Panc1 (cell line): ENCODE measurements at regions of chr19 and their contacts with region 1.

Region 1: GRCh38 chr19:39307046-39307823 is 11.0 kb downstream of the IFNL1 start:
- DNase-seq: no peak
- ATAC-seq: peak; percentile 2; the same call in 1 of the 2 replicates
- H3K4me3 ChIP-seq: no peak overlapping the region
- H3K27ac ChIP-seq: no peak overlapping the region
- H3K4me1 ChIP-seq: peaks cover 9% of the 10 kb centered on the region; the same call in 1 of the 2 replicates
- H3K27me3 ChIP-seq: peaks cover 9% of the 10 kb centered on the region; the same call in 1 of the 2 replicates
- CTCF ChIP-seq: no peak

Region 2: GRCh38 chr19:38989066-38989605 is 318.1 kb before region 1 on chr19:
- CTCF ChIA-PET with region 1: no interaction called
- POLR2A ChIA-PET with region 1: no interaction called
- in situ Hi-C with region 1: no loop called
- intact Hi-C with region 1: no loop called
- DNase-seq: no peak
- ATAC-seq: peak; percentile 80
- H3K4me3 ChIP-seq: no peak overlapping the region
- H3K27ac ChIP-seq: peak overlapping the region; percentile 2
- H3K4me1 ChIP-seq: peaks cover 14% of the 10 kb centered on the region
- H3K27me3 ChIP-seq: no peaks in the 10 kb centered on the region
- CTCF ChIP-seq: no peak

Region 3: DNA sequence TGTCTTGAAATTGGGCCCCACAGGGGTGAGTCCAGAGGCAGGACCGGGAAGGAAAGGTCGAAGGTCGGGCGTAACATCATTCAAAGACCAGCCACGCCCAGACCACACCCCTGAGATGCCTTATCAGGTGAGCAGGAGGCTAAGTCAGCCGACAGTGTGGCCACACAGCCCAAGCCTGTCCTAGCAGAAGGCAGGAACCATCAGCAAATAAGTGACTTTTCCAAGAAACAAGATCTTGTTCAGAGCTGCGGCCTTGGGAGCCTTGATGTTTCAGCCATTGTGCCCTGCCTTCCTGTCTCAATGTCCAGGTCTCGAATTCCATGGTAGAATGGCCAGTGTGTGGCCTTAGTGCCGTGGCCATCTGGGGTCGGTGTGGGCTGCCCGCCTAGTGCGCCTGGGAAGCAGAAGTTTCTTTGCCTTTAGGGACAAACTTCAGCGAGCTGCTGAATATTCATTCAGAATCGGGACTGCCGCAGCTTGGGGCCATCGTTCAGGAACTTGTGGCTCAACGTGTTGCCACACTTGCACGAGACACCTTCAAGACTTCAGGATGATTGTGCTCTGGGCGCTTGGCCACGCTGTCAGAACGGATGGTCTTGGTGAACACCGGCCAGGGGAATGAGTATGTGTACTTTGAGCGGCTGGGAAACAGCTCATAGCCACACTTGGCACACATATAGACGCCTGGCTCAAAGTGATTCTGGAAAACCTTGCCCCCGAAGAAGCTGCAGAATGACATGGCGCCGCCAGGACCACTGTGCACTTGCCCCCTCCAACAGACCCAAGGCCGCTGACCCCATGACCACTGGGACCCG is 52.5 kb before region 1 on chr19:
- CTCF ChIA-PET with region 1: interaction called, 12 read pairs
- POLR2A ChIA-PET with region 1: interaction called, 3 read pairs
- in situ Hi-C with region 1: loop called (anchors 5 kb)
- intact Hi-C with region 1: no loop called
- DNase-seq: no peak
- ATAC-seq: no peak
- H3K4me3 ChIP-seq: no peak overlapping the region
- H3K27ac ChIP-seq: no peak overlapping the region
- H3K4me1 ChIP-seq: no peaks in the 10 kb centered on the region
- H3K27me3 ChIP-seq: peaks cover 4% of the 10 kb centered on the region; the same call in 1 of the 2 replicates
- CTCF ChIP-seq: no peak

Region 4: GRCh38 chr19:39335168-39335548 is 27.9 kb after region 1 on chr19:
- CTCF ChIA-PET with region 1: interaction called, 10 read pairs
- POLR2A ChIA-PET with region 1: interaction called, 13 read pairs
- in situ Hi-C with region 1: no loop called
- intact Hi-C with region 1: no loop called
- DNase-seq: no peak
- ATAC-seq: peak; percentile 6
- H3K4me3 ChIP-seq: no peak overlapping the region
- H3K27ac ChIP-seq: no peak overlapping the region
- H3K4me1 ChIP-seq: peaks cover 4% of the 10 kb centered on the region; the same call in 1 of the 2 replicates
- H3K27me3 ChIP-seq: no peaks in the 10 kb centered on the region
- CTCF ChIP-seq: no peak

Region 5: DNA sequence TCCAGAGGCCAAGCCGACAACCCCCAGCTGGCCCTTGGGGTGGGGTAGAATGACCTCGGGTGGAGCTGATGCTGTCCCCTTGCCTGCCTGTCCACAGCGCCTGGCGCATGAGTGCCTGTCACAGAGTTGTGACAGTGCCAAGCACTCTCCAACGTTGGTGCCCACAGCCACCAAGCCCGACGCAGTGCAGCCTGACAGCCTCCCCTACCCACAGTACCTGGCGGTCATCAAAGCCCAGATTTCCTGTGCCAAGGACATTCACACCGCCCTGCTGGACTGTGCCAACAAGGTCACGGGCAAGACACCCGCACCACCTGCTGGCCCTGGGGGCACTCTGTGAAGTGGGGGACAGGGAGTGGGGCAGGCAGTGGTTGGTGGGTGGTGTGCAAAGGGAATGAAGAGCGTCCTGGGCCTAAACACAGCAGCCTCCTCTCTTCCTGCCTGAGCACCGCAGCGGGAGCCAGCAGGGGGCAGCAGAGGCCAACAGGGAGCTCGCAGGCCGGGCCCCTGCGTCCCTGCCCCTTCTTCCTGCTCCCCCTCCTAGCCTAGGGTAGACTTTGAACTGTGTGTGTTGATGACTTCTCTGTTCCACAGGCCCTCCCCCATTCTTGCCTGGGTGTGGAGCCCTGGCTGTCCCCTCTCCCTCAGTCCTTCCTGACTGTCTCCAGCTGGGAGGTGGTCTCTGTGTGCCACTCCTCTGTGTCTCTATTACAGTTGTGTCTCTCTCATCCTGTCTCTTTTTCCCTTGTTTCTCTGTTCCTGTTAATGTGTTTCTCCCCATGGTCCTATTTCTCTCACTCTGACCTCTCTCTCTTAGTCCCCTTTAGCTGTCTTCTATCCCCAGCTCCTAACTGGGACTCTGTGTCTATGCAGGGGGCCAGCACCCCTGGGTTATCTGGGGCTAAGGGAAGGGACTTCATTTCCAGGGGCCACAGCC is 90.4 kb after region 1 on chr19:
- CTCF ChIA-PET with region 1: interaction called, 4 read pairs
- POLR2A ChIA-PET with region 1: no interaction called
- in situ Hi-C with region 1: loop called (anchors 5 kb)
- intact Hi-C with region 1: no loop called
- DNase-seq: peak; percentile 100
- ATAC-seq: peak; percentile 78
- H3K4me3 ChIP-seq: no peak overlapping the region
- H3K27ac ChIP-seq: peak overlapping the region; percentile 75
- H3K4me1 ChIP-seq: peaks cover 51% of the 10 kb centered on the region
- H3K27me3 ChIP-seq: no peaks in the 10 kb centered on the region
- CTCF ChIP-seq: no peak

Region 6: DNA sequence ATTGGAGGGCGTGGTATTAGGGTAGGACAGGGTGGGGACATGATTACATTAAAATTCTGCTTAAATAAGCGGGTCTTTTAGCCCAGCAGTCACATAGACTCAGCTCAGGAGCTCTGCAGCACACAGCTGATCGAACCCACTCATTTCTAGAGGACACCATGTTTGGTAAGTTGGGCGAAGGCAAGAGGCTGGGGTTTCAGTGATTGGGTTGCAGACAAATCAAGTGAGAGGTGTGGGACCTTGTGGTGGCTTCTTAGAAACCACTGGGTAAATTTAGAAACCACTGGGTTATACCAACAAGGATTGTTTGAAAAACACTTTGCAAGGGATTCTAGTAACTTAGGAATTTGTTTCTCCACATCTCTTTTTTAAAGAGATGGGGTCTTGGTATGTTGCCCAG is 471.5 kb after region 1 on chr19 and contains the start of gene LEUTX:
- CTCF ChIA-PET with region 1: interaction called, 4 read pairs
- POLR2A ChIA-PET with region 1: no interaction called
- in situ Hi-C with region 1: loop called (anchors 5 kb)
- intact Hi-C with region 1: no loop called
- DNase-seq: no peak
- ATAC-seq: no peak
- H3K4me3 ChIP-seq: no peak within 1 kb of the TSS
- H3K27ac ChIP-seq: no peak within 1 kb of the TSS
- H3K4me1 ChIP-seq: no peaks in the 10 kb centered on the region
- H3K27me3 ChIP-seq: peaks cover 86% of the 10 kb centered on the region
- CTCF ChIP-seq: no peak
- total RNA-seq, gene LEUTX: not detected